ENCODE measurements at regions of chr20 and their contacts with region 1.

Region 1: GRCh38 chr20:59933849-59934596 is 586 bp upstream of the SYCP2 start:
- DNase-seq: peak; percentile 97
- H3K4me3 ChIP-seq: peak overlapping the region; percentile 75
- H3K27ac ChIP-seq: peak overlapping the region; percentile 45 to 81
- H3K4me1 ChIP-seq: peaks cover 8 to 17% of the 10 kb centered on the region in 2 experiments; a peak in 3 of 4 replicates
- H3K27me3 ChIP-seq: no peaks in the 10 kb centered on the region
- CTCF ChIP-seq: peak; percentile 91
- EP300 ChIP-seq: no peak
- RAD21 ChIP-seq: peak; percentile 32

Region 2: GRCh38 chr20:59948828-59949720 is 15.1 kb after region 1 on chr20:
- CTCF ChIA-PET with region 1: interaction called, 95 read pairs
- POLR2A ChIA-PET with region 1: no interaction called
- DNase-seq: peak; percentile 44
- H3K4me3 ChIP-seq: no peak overlapping the region
- H3K27ac ChIP-seq: no peak overlapping the region
- H3K4me1 ChIP-seq: peaks cover 0 to 2% of the 10 kb centered on the region in 2 experiments; a peak in 1 of 4 replicates
- H3K27me3 ChIP-seq: no peaks in the 10 kb centered on the region
- CTCF ChIP-seq: peak; percentile 79
- EP300 ChIP-seq: no peak
- RAD21 ChIP-seq: peak; percentile 76

Region 3: GRCh38 chr20:59985864-59986263 is 51.8 kb after region 1 on chr20:
- CTCF ChIA-PET with region 1: no interaction called
- POLR2A ChIA-PET with region 1: no interaction called
- DNase-seq: no peak
- H3K4me3 ChIP-seq: no peak overlapping the region
- H3K27ac ChIP-seq: no peak overlapping the region
- H3K4me1 ChIP-seq: no peaks in the 10 kb centered on the region
- H3K27me3 ChIP-seq: no peaks in the 10 kb centered on the region
- CTCF ChIP-seq: no peak
- EP300 ChIP-seq: no peak
- RAD21 ChIP-seq: no peak